Motor neuron (in vitro differentiated cells): ENCODE measurements at regions of chr13 and their contacts with region 1.

Region 1: DNA sequence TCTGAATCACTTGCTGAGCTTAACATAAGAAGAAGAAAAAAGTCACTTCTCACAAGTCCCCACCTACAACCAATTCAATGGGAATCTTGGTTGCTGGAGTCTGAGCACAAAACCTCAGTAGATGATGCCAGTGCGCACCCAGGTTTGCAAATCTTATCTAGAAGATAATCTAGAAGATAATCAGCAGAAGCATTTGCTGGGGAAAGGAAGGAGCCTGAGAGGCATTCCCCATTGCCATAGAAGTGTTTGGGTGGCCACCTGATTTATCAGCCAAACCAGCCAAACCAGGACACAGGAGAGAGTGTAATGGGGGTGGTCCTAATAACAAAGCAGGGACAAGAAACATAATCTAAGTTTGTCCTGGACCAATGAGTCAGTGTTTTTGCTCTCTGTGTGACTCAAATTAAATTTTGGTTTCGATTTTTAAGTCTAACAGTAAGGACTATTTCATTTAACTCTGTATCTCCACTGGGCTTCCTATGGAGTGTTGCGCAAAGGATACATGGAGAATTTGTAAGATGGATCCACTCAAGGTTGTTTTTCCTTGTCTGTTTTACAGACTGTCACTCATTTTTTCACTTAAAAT is 19.4 kb upstream of the TRPC4 start:
- ATAC-seq: peak in 1 of 8 experiments; percentile 51
- H3K4me3 ChIP-seq: no peak overlapping the region
- H3K27ac ChIP-seq: no peak overlapping the region
- H3K4me1 ChIP-seq: no peaks in the 10 kb centered on the region

Region 2: DNA sequence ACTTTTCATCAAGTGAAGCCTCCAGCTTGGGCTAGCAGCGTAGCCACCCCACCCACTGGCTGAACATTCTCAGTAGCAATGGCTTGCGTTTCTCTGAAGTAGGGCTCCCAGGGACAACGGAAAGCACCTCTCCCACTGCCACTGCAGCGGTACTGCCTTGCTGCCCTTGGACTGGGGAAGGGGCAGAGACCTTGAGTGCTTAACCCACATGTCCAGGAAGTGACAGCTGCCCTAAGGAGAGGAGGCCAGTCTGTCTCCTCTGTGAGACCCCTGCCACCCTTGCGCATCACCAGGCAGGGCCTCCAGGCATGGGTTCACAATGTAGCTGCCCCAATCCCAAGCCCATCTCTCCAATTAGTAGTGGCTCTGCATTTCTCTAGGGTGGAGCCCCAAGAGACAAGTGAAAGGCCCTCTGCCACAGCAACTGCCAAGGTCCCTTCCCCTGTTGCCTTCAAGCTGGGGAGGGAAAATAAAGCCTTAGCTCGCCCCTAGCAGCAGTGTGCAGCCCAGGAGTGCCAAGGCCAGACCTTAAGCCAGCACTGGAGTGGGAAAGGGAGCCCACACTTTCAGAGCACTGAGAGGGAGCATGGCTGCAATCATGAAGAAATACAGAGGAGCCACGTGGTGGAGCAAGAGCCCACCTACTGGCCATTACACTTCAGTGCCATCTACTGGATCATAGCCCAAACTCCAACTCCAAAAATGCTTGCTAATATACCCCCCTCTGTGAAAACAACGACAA is 156.5 kb after region 1 on chr13:
- in situ Hi-C with region 1: loop called in 1 of 9 experiments (anchors 25 kb)
- ATAC-seq: peak in 3 of 8 experiments; percentile 67 to 91 (median 79)
- H3K4me3 ChIP-seq: no peak overlapping the region
- H3K27ac ChIP-seq: no peak overlapping the region
- H3K4me1 ChIP-seq: no peaks in the 10 kb centered on the region